Psoas muscle (tissue), 8 donors: ENCODE measurements at regions of chr5 and their contacts with region 1.

Region 1: DNA sequence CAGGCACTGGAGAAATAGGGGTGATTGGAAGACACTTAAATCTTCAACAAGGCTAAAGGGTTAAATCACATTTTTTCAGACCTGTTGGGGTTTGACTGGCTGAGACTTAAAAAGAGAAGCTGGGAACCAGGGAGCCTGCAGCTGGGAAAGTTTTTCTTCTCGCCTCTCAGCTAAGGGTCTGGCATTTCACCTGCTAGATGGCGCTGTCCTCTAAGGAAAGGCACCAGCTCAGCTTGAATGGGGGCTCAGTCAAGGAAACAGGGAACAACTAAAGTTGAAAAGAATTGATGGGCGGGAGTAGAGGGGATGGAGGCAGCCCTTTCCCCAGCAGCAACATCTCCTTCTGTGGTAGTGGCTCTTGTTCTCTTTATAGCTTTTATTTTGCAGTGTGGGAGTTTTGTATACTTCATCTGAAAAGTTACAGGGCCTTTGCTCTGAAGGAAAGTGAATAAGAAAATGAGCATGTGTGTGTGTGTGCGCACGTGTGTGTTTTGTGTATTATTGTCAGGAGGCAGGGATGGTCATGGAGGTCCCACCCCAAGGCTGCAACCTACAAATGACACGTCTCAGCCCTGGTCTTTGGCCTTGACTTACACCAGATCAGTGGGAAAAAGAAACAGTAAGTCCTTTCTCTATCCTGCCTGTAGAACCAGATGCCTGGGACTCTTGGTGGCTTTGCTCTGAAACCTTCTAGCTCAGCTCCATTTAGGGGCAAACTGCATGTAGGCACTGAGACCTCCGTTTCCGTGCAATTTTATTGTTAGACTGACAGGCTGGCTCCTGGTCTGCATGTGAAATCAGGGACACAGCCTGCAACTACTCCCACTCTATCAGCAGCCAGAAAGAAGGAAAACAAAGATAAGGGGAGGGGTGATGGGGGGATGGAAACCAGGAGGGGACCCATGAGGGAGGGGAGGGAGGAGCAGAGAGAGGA is 316.2 kb upstream of the CLINT1 start:
- DNase-seq: peak; percentile 67 to 76
- ATAC-seq: peak in 3 of 4 donors; percentile 52 to 78 (median 67)
- H3K4me3 ChIP-seq: no peak overlapping the region
- H3K27ac ChIP-seq: no peak overlapping the region
- H3K4me1 ChIP-seq: no peaks in the 10 kb centered on the region
- H3K27me3 ChIP-seq: no peaks in the 10 kb centered on the region
- CTCF ChIP-seq: peak; percentile 64

Region 2: DNA sequence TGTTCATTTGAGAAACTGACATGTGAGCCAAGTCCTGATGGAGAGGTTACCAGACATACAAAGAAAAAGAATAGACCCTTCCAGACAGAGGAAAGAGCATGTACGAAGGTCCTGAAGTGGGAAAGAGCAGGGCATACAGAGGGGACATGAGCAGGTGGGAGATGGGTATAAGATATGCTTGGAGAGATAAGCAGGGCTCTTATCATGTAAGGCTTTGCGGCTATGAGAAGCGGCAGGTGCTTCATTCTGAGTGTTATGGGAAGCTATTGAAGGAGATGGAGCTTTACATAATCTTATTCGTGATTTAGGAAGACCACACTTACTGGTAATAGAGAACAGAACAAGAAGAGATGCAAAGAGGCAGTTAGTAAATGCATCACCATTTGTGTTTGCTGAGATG is 507.4 kb after region 1 on chr5:
- intact Hi-C with region 1: loop called in 1 of 2 experiments (anchors 5 kb)
- DNase-seq: no peak
- ATAC-seq: no peak
- H3K4me3 ChIP-seq: no peak overlapping the region
- H3K27ac ChIP-seq: no peak overlapping the region
- H3K4me1 ChIP-seq: no peaks in the 10 kb centered on the region
- H3K27me3 ChIP-seq: peaks cover 0 to 4% (median 0%) of the 10 kb centered on the region in 3 donors
- CTCF ChIP-seq: no peak

Region 3: DNA sequence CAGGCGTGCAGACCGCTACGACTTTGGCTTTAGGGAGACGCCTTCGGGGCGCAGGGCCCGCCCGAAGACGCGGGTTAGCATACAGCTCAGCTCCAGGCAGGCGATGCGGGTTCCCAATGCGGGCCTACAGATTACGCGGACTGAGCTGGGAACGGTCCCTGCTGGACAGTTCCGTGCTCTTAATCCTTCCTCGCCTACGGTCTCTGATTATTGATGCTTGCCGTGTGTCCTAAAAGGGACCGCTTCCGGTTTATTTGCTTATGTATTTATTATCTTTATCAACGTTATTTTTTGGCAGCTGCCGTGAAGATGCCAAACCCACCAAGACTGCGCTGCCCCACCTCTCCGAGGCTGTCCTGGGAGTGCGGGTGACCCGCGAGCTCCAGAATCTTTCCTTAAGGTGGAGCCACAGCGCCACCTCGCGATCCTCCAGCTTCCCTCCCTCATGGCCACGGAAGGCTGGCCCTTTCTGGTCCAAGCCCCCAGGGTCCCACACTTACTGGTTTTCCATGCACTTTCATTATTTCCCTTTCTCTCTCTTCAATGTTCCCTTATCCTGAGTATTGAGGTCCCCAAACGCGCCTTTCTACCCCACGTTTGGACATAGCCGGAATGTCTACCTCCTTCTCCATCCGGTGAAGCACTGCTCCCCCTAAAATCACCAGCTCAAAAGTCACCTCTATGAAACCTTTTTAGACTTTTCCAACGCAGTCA is 931.5 kb after region 1 on chr5:
- intact Hi-C with region 1: loop called (anchors 2 to 5 kb)
- DNase-seq: peak; percentile 84 to 87
- ATAC-seq: peak; percentile 69 to 90 (median 85)
- H3K4me3 ChIP-seq: peak overlapping the region; percentile 47
- H3K27ac ChIP-seq: no peak overlapping the region
- H3K4me1 ChIP-seq: no peaks in the 10 kb centered on the region
- H3K27me3 ChIP-seq: peaks cover 8 to 82% (median 9%) of the 10 kb centered on the region in 3 donors
- CTCF ChIP-seq: peak; percentile 90